ENCODE measurements at regions of chr16 and their contacts with region 1.

Region 1: GRCh38 chr16:79601931-79602627 is 1.5 kb upstream of the MAF start:
- DNase-seq: peak; percentile 85 to 89 (median 85)
- H3K4me3 ChIP-seq: peak overlapping the region; percentile 57 to 90
- H3K4me3 Mint-ChIP-seq: peak overlapping the region; percentile 95 to 99 (median 98)
- H3K27ac ChIP-seq: peak overlapping the region; percentile 65
- H3K27ac Mint-ChIP-seq: peak overlapping the region; percentile 73 to 99 (median 96)
- H3K4me1 ChIP-seq: peaks cover 27% of the 10 kb centered on the region
- H3K4me1 Mint-ChIP-seq: peaks cover 18 to 54% (median 32%) of the 10 kb centered on the region in 4 donors
- H3K27me3 ChIP-seq: no peaks in the 10 kb centered on the region
- H3K27me3 Mint-ChIP-seq: no peaks in the 10 kb centered on the region

Region 2: DNA sequence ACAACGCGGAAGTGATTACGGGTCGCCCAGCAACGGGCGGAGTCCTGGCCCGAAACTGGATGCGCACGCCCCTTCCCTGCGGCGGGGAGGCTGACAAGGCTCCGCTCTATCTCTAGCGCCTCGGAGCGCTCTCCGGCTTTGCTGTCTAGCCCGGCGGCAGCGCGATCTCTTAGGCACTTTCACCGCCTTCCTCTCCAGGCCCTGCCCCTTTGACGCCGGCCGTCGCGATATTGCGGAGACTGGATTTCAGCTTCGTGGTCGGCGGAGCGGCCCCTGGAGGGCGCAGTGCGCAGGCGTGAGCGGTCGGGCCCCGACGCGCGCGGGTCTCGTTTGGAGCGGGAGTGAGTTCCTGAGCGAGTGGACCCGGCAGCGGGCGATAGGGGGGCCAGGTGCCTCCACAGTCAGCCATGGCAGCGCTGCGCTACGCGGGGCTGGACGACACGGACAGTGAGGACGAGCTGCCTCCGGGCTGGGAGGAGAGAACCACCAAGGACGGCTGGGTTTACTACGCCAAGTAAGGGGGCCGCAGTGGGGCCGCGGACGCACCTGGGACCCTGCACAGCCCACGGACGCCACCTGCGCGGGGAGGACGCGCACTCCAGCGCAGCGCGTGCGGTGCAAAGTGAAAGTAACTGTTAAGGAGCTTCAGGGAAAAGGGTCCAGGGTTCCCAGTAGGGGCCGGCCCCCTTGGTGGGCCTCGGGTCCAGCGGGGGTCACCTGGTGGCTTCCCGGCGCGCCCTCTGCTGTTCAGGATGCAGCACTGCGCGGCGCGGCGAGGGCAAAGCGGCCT is 1502.5 kb before region 1 on chr16 and contains the start of gene WWOX:
- CTCF ChIA-PET with region 1: interaction called, 5 read pairs
- POLR2A ChIA-PET with region 1: interaction called, 5 read pairs
- intact Hi-C with region 1: loop called (anchors 1 kb)
- DNase-seq: peak; percentile 96 to 98 (median 98)
- H3K4me3 ChIP-seq: peak within 1 kb of the TSS; percentile 78 to 88
- H3K4me3 Mint-ChIP-seq: peak within 1 kb of the TSS; percentile 89 to 96 (median 91)
- H3K27ac ChIP-seq: peak within 1 kb of the TSS; percentile 89
- H3K27ac Mint-ChIP-seq: peak within 1 kb of the TSS; percentile 93 to 98 (median 96)
- H3K4me1 ChIP-seq: peaks cover 16% of the 10 kb centered on the region
- H3K4me1 Mint-ChIP-seq: peaks cover 16 to 44% (median 25%) of the 10 kb centered on the region in 4 donors
- H3K27me3 ChIP-seq: no peaks in the 10 kb centered on the region
- H3K27me3 Mint-ChIP-seq: peaks cover 0 to 7% of the 10 kb centered on the region in 2 donors
- total RNA-seq, gene WWOX: 21.9 to 23.1 TPM

Region 3: GRCh38 chr16:78705694-78706093 is 896.4 kb before region 1 on chr16:
- CTCF ChIA-PET with region 1: interaction called, 3 read pairs
- POLR2A ChIA-PET with region 1: interaction called, 3 read pairs
- intact Hi-C with region 1: loop called (anchors 1 kb)
- DNase-seq: peak in 4 of 5 donors; percentile 23 to 48 (median 44)
- H3K4me3 ChIP-seq: no peak overlapping the region
- H3K4me3 Mint-ChIP-seq: no peak overlapping the region
- H3K27ac ChIP-seq: no peak overlapping the region
- H3K27ac Mint-ChIP-seq: no peak overlapping the region
- H3K4me1 ChIP-seq: no peaks in the 10 kb centered on the region
- H3K4me1 Mint-ChIP-seq: peaks cover 0 to 3% (median 0%) of the 10 kb centered on the region in 4 donors
- H3K27me3 ChIP-seq: no peaks in the 10 kb centered on the region
- H3K27me3 Mint-ChIP-seq: no peaks in the 10 kb centered on the region

Region 4: DNA sequence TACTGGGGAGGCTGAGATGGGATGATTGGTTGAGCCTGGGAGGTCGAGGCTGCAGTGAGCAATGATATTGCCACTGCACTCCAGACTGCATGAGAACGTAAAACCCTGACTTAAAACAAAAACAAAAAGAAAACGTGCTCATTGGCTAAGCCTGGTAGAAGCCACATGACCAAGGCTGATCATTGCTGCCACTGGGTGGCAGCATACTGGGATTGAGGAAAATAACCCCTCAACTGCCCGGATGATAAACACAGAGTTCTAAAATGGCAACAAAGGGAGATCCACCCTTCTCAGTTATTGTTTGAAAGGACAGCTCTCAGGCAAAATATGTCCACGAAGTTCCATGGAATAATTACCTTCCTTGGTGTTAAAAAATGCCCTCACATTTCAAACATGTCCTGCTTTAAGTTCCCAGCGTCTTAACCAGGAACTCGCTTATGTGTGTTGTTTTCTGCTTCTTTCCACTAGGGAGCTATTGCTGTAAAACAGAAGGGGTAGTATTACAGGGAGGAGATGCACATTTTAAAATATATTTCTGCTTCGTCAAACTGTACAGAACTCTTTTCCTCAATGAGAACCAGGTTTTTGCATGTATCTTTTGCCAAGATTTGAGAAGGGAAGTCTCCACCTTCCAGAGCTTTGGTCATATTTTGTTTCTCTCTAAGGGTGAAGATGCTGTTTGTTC is 676.9 kb before region 1 on chr16:
- CTCF ChIA-PET with region 1: interaction called, 19 read pairs
- POLR2A ChIA-PET with region 1: interaction called, 3 read pairs
- intact Hi-C with region 1: loop called (anchors 1 kb)
- DNase-seq: peak in 2 of 5 donors; percentile 7 to 25
- H3K4me3 ChIP-seq: no peak overlapping the region
- H3K4me3 Mint-ChIP-seq: no peak overlapping the region
- H3K27ac ChIP-seq: no peak overlapping the region
- H3K27ac Mint-ChIP-seq: peak overlapping the region in 2 of 7 donors; percentile 16 to 42
- H3K4me1 ChIP-seq: no peaks in the 10 kb centered on the region
- H3K4me1 Mint-ChIP-seq: peaks cover 0 to 17% (median 10%) of the 10 kb centered on the region in 4 donors
- H3K27me3 ChIP-seq: no peaks in the 10 kb centered on the region
- H3K27me3 Mint-ChIP-seq: no peaks in the 10 kb centered on the region

Region 5: GRCh38 chr16:79269211-79269863 is 332.7 kb before region 1 on chr16:
- CTCF ChIA-PET with region 1: interaction called, 8 read pairs
- POLR2A ChIA-PET with region 1: interaction called, 102 read pairs
- intact Hi-C with region 1: loop called (anchors 2 kb)
- DNase-seq: peak in 4 of 5 donors; percentile 43 to 74 (median 57)
- H3K4me3 ChIP-seq: peak overlapping the region in 1 of 2 donors; percentile 5
- H3K4me3 Mint-ChIP-seq: peak overlapping the region; percentile 67 to 88 (median 79)
- H3K27ac ChIP-seq: no peak overlapping the region
- H3K27ac Mint-ChIP-seq: peak overlapping the region; percentile 81 to 96 (median 91)
- H3K4me1 ChIP-seq: peaks cover 70% of the 10 kb centered on the region
- H3K4me1 Mint-ChIP-seq: peaks cover 63 to 81% (median 68%) of the 10 kb centered on the region in 4 donors
- H3K27me3 ChIP-seq: no peaks in the 10 kb centered on the region
- H3K27me3 Mint-ChIP-seq: peaks cover 0 to 2% of the 10 kb centered on the region in 2 donors

Region 6: DNA sequence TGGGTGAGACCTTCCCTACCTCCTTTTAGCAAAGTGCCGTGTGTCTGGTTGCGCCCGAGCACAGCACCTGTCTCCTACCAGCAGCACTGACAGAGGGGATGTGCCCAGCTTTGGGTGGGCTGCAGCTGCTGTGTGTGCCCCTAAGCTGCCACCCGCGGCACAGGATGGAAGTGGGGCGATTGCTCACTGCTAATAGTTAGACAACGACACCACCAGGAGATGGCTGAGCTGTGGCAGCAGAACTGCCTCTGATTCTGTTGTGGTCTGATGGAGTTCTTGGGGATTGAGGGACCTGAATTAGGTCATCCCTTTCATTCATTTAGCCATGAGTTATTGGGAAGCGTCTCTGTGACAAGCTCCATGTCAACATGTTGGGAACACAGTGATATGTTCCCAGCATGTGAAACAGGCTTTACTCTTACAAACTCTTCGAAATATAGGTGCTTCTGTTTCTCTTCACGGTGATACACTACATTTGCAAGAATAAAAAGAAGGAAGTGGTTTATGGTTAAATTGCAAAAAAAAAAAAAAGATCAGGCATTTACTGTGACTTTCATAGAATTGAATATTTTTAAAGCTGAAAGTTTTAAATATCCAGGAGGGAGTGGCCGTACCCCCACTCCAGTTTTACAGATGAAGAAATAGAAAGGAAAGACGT is 186.0 kb before region 1 on chr16:
- CTCF ChIA-PET with region 1: interaction called, 4 read pairs
- POLR2A ChIA-PET with region 1: interaction called, 20 read pairs
- intact Hi-C with region 1: loop called (anchors 1 kb)
- DNase-seq: peak in 4 of 5 donors; percentile 29 to 53 (median 46)
- H3K4me3 ChIP-seq: peak overlapping the region in 1 of 2 donors; percentile 16
- H3K4me3 Mint-ChIP-seq: peak overlapping the region; percentile 43 to 80 (median 72)
- H3K27ac ChIP-seq: no peak overlapping the region
- H3K27ac Mint-ChIP-seq: peak overlapping the region; percentile 9 to 90 (median 81)
- H3K4me1 ChIP-seq: peaks cover 39% of the 10 kb centered on the region
- H3K4me1 Mint-ChIP-seq: peaks cover 33 to 57% (median 47%) of the 10 kb centered on the region in 4 donors
- H3K27me3 ChIP-seq: no peaks in the 10 kb centered on the region
- H3K27me3 Mint-ChIP-seq: no peaks in the 10 kb centered on the region

Region 7: GRCh38 chr16:79571065-79571902 is 30.8 kb before region 1 on chr16:
- CTCF ChIA-PET with region 1: no interaction called
- POLR2A ChIA-PET with region 1: no interaction called
- intact Hi-C with region 1: no loop called
- DNase-seq: no peak
- H3K4me3 ChIP-seq: no peak overlapping the region
- H3K4me3 Mint-ChIP-seq: no peak overlapping the region
- H3K27ac ChIP-seq: no peak overlapping the region
- H3K27ac Mint-ChIP-seq: no peak overlapping the region
- H3K4me1 ChIP-seq: no peaks in the 10 kb centered on the region
- H3K4me1 Mint-ChIP-seq: no peaks in the 10 kb centered on the region
- H3K27me3 ChIP-seq: no peaks in the 10 kb centered on the region
- H3K27me3 Mint-ChIP-seq: peaks cover 1 to 11% of the 10 kb centered on the region in 2 donors

Region 8: DNA sequence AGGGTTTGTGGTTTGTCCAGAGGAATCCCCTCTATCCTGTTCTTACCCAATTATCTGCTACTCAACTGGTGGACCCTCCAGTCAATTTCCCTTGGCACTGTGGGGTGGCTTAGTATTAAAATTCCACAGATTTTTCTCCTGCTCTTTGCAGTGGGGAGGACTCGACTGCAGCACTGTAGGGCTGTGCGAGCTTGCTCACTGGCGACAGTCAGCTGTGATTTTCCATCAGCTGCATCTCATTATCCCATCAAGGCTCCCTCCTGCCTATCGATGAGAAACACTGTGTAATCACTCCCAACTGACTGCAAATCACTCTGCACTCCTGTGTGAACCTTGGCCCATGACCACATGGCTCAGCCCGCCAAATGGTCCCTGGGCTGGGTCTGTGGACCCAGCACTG is 88.9 kb after region 1 on chr16:
- CTCF ChIA-PET with region 1: no interaction called
- POLR2A ChIA-PET with region 1: no interaction called
- intact Hi-C with region 1: no loop called
- DNase-seq: no peak
- H3K4me3 ChIP-seq: no peak overlapping the region
- H3K4me3 Mint-ChIP-seq: no peak overlapping the region
- H3K27ac ChIP-seq: no peak overlapping the region
- H3K27ac Mint-ChIP-seq: no peak overlapping the region
- H3K4me1 ChIP-seq: no peaks in the 10 kb centered on the region
- H3K4me1 Mint-ChIP-seq: no peaks in the 10 kb centered on the region
- H3K27me3 ChIP-seq: no peaks in the 10 kb centered on the region
- H3K27me3 Mint-ChIP-seq: peaks cover 3 to 4% of the 10 kb centered on the region in 2 donors

Region 9: DNA sequence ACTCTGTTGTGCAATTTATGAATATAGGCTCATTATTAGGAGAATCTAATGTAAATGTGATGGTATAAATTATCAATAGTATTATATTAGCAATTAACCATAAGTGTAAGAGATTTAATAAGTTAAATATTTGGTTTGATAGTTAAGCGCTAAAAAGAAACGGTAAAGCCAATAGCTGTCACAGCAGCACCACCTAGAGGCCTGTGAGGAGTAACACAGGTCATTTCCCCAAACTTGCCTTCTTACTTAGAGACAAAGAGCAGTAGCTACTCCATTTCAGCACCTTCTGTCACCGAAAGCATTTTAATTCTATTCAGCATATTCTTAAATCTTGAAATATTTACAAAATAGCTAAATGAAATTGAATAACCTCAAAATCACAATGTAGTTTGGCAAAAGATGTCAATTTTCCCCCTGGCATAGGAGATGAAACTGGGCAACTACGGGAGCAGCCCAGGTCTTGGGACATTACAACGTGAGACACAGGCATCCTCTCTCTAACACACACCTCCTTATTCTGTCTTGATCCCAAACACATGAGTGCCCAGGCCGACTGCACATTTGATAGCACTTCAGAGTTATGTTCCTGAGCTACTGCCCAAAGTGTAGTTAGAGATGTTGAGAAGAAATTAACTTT is 924.5 kb after region 1 on chr16:
- CTCF ChIA-PET with region 1: no interaction called
- POLR2A ChIA-PET with region 1: no interaction called
- intact Hi-C with region 1: loop called (anchors 2 kb)
- DNase-seq: peak; percentile 53 to 66 (median 62)
- H3K4me3 ChIP-seq: no peak overlapping the region
- H3K4me3 Mint-ChIP-seq: no peak overlapping the region
- H3K27ac ChIP-seq: no peak overlapping the region
- H3K27ac Mint-ChIP-seq: peak overlapping the region in 1 of 7 donors; percentile 18
- H3K4me1 ChIP-seq: peaks cover 6% of the 10 kb centered on the region
- H3K4me1 Mint-ChIP-seq: peaks cover 0 to 4% (median 2%) of the 10 kb centered on the region in 4 donors
- H3K27me3 ChIP-seq: no peaks in the 10 kb centered on the region
- H3K27me3 Mint-ChIP-seq: no peaks in the 10 kb centered on the region

Measured in CD4-positive, alpha-beta memory T cell (primary cell).